Caco-2 (cell line): ENCODE measurements at regions of chr12 and their contacts with region 1.

Region 1: DNA sequence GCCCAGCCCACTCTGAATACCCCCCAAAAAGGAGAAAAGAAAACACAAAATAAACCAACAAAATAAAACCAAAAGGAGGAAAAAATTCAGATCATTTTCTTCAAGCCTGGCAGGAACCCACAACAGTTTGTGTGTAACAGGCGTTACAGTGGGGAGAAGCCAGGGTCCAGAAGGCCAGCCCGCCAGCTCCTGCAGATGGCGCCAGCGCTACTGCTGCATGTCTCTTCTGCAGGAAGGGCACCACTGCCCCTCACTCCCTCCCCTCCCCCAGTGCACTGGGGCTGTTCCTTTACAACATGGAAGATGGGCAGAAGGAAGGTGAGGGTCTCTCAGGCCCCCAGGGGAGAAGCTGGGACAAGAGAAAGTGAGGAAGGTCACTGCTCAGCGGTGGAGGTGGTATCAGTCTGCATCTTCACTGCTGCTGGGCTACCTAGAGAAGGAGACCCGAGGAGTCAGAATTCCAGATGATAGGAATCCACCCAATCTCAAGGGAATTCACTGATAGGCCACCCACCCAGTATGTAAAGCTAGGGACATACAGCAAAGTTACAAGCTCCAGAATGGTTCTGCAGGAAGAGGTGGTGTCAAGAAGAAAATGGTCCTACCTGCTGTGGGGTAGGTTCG is 2.3 kb upstream of the NOP2 start:
- DNase-seq: peak; percentile 82 to 84
- H3K4me3 ChIP-seq: no peak overlapping the region
- H3K4me3 Mint-ChIP-seq: peak overlapping the region; percentile 81
- H3K27ac Mint-ChIP-seq: no peak overlapping the region
- H3K4me1 ChIP-seq: no peaks in the 10 kb centered on the region
- H3K4me1 Mint-ChIP-seq: peaks cover 23% of the 10 kb centered on the region
- H3K27me3 ChIP-seq: no peaks in the 10 kb centered on the region
- H3K27me3 Mint-ChIP-seq: no peaks in the 10 kb centered on the region
- CTCF ChIP-seq: peak; percentile 76 to 82

Region 2: DNA sequence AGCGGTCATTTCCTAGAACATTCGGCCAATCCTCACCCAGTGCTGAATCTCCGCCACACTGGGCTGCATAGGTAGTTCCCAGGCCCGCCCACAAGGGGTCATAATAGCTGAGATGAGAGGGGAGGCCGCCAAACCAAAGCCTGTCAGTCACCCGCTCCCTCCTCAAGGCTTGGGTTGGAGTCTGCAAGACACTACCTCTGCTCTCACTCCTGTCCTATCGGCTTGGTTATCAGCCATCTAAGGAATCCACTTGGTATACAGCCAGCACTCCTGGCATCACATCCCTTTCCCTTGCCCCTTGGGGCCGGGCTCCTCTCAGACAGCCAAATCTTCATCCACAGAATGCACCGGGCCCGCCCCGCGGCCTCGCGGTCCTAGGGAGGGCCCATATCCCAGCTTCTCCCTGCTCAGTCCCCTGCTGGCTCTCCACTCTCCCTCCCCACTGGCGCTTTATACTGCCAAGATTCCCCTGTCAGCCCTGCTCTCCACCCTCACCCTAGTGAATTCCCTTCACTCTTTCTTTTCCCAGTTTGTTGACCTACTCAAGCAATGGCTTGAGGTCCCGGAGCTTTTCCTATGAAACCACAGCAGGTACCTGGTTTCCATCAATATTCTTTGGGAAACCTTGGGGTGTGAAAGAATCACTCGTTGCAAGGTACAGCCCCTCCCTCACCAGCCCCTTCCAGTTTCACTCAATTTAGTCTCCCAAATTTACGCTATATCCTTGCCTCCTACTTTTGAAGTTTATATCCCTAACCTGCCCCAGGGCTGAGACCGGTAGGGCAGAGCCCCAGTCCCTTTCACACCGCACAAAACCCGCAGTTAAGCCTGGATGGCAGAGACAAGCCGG is 16.0 kb before region 1 on chr12:
- CTCF ChIA-PET with region 1: interaction called, 14 read pairs
- POLR2A ChIA-PET with region 1: interaction called, 3 read pairs
- intact Hi-C with region 1: no loop called
- DNase-seq: peak; percentile 87 to 91
- H3K4me3 ChIP-seq: no peak overlapping the region
- H3K4me3 Mint-ChIP-seq: no peak overlapping the region
- H3K27ac Mint-ChIP-seq: no peak overlapping the region
- H3K4me1 ChIP-seq: peaks cover 7% of the 10 kb centered on the region; the same call in 1 of the 2 replicates
- H3K4me1 Mint-ChIP-seq: no peaks in the 10 kb centered on the region
- H3K27me3 ChIP-seq: no peaks in the 10 kb centered on the region
- H3K27me3 Mint-ChIP-seq: no peaks in the 10 kb centered on the region
- CTCF ChIP-seq: peak; percentile 78 to 84

Region 3: DNA sequence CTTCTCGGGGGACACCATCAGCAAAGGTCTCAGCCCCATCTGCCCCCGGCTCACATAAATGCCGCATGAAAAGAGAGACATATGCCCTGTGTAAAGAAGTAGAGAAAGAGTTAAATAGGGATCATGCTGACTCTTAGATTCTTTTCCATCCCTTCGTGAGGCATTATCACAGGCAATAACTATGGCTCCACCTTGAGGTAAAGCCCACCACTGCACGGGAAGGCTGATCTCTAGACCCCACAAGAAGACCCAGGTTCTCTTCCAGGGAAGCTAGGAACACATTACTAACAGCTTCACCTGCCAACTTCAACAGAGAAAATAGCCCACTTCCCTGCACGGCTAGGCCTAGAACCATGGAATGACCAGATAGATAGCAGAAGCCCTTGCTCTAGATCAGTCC is 11.8 kb after region 1 on chr12:
- CTCF ChIA-PET with region 1: interaction called, 3 read pairs
- POLR2A ChIA-PET with region 1: no interaction called
- intact Hi-C with region 1: loop called (anchors 2 kb)
- DNase-seq: peak in 1 of 2 experiments; percentile 43
- H3K4me3 ChIP-seq: no peak overlapping the region
- H3K4me3 Mint-ChIP-seq: no peak overlapping the region
- H3K27ac Mint-ChIP-seq: no peak overlapping the region
- H3K4me1 ChIP-seq: no peaks in the 10 kb centered on the region
- H3K4me1 Mint-ChIP-seq: no peaks in the 10 kb centered on the region
- H3K27me3 ChIP-seq: no peaks in the 10 kb centered on the region
- H3K27me3 Mint-ChIP-seq: no peaks in the 10 kb centered on the region
- CTCF ChIP-seq: peak in 1 of 2 experiments; percentile 63

Region 4: DNA sequence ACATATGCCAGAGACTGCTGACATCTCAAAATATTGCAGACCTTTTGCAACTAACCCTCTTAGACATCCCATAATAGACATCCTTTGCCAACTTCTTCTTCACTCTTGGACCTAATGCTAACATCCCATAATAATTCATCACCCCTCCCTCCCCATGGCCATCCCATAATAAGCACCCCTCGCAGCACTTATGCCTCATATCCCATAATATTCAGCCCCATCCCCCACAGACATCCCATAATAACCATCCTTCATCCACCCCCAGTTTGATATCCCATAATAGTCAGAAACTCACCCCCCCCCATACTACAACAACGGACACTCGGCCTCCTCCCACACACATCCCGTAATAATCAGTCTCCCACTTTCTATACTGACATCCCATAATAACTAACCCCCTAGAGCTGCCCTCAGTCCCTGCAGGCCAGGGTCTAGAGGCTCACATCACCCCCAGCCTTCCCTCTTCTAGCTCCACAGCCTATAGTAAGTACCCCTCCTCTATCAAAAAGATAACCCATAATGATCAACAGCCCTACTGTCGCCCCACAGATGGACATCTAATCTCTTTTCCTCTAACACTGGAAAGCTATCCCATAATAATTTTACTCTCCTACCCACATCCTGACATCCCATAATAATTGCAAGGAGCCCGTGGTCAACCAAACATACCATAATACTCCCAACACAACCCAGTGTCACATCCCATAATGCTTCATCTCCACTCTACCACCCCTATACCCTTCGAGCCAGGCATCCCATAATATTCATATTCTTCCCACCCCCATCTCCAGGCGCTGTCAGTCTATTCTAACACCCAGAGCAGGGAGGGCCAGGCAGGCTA is 37.6 kb after region 1 on chr12:
- CTCF ChIA-PET with region 1: interaction called, 5 read pairs
- POLR2A ChIA-PET with region 1: interaction called, 3 read pairs
- intact Hi-C with region 1: loop called (anchors 5 kb)
- DNase-seq: peak; percentile 76 to 87
- H3K4me3 ChIP-seq: peak overlapping the region; percentile 86
- H3K4me3 Mint-ChIP-seq: no peak overlapping the region
- H3K27ac Mint-ChIP-seq: no peak overlapping the region
- H3K4me1 ChIP-seq: peaks cover 38% of the 10 kb centered on the region
- H3K4me1 Mint-ChIP-seq: peaks cover 20% of the 10 kb centered on the region
- H3K27me3 ChIP-seq: no peaks in the 10 kb centered on the region
- H3K27me3 Mint-ChIP-seq: no peaks in the 10 kb centered on the region
- CTCF ChIP-seq: no peak

Region 5: GRCh38 chr12:6825398-6826124 is 255.2 kb after region 1 on chr12:
- CTCF ChIA-PET with region 1: no interaction called
- POLR2A ChIA-PET with region 1: no interaction called
- intact Hi-C with region 1: loop called (anchors 5 kb)
- DNase-seq: peak; percentile 87 to 93
- H3K4me3 ChIP-seq: no peak overlapping the region
- H3K4me3 Mint-ChIP-seq: no peak overlapping the region
- H3K27ac Mint-ChIP-seq: no peak overlapping the region
- H3K4me1 ChIP-seq: peaks cover 23% of the 10 kb centered on the region
- H3K4me1 Mint-ChIP-seq: peaks cover 14% of the 10 kb centered on the region
- H3K27me3 ChIP-seq: no peaks in the 10 kb centered on the region; the same call in 1 of the 2 replicates
- H3K27me3 Mint-ChIP-seq: peaks cover 26% of the 10 kb centered on the region
- CTCF ChIP-seq: peak; percentile 97 to 98